Adrenal gland (tissue), 19 donors: ENCODE measurements at regions of chr2 and their contacts with region 1.

Region 1: GRCh38 chr2:37389989-37390765 is 45.7 kb downstream of the QPCT start:
- DNase-seq: peak in 2 of 7 donors; percentile 35 to 52
- H3K4me3 ChIP-seq: no peak overlapping the region
- H3K27ac ChIP-seq: peak overlapping the region in 2 of 5 donors; percentile 24 to 39
- H3K4me1 ChIP-seq: peaks cover 0 to 14% of the 10 kb centered on the region in 2 donors
- H3K27me3 ChIP-seq: no peaks in the 10 kb centered on the region
- CTCF ChIP-seq: no peak
- POLR2A ChIP-seq: no peak

Region 2: DNA sequence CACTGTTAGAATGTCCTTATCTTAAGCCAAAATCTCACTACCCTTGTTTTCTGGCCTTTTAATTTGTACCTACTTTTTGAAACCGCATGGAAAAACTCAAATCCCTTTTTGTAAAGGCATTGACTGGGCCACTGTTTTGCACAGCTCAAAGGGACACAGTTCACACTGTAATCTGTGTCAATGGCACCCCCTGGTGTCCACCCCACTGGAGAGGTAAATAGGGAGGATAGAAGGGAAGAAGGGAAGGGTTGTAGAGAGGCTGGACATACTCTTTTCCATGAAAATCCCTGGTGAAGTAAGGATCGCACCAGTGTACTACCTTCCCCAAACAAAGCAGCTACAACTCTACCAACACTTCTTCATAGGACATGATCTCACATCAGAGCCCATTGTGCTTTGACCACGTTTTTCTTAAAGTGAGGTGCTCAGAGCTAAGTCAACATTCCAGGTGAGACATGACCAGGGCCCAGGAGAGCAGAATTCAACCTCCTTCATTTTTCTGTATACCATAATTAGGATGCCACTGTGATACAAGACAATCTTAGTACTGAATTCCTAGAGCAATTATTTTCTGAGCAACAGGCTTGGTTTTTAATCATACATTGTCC is 442.5 kb after region 1 on chr2:
- intact Hi-C with region 1: loop called in 1 of 2 experiments (anchors 5 kb)
- DNase-seq: peak; percentile 83 to 96 (median 91)
- H3K4me3 ChIP-seq: no peak overlapping the region
- H3K27ac ChIP-seq: no peak overlapping the region
- H3K4me1 ChIP-seq: peaks cover 3 to 8% of the 10 kb centered on the region in 2 donors
- H3K27me3 ChIP-seq: no peaks in the 10 kb centered on the region
- CTCF ChIP-seq: peak; percentile 60 to 91 (median 85)
- POLR2A ChIP-seq: no peak

Region 3: GRCh38 chr2:37877457-37878315 is 487.5 kb after region 1 on chr2:
- intact Hi-C with region 1: loop called in 1 of 2 experiments (anchors 5 kb)
- DNase-seq: peak in 2 of 7 donors; percentile 35 to 47
- H3K4me3 ChIP-seq: no peak overlapping the region
- H3K27ac ChIP-seq: no peak overlapping the region
- H3K4me1 ChIP-seq: peaks cover 0 to 6% of the 10 kb centered on the region in 2 donors
- H3K27me3 ChIP-seq: no peaks in the 10 kb centered on the region
- CTCF ChIP-seq: peak; percentile 58 to 83 (median 82)
- POLR2A ChIP-seq: no peak